ENCODE measurements at regions of chr1 and their contacts with region 1.

Region 1: DNA sequence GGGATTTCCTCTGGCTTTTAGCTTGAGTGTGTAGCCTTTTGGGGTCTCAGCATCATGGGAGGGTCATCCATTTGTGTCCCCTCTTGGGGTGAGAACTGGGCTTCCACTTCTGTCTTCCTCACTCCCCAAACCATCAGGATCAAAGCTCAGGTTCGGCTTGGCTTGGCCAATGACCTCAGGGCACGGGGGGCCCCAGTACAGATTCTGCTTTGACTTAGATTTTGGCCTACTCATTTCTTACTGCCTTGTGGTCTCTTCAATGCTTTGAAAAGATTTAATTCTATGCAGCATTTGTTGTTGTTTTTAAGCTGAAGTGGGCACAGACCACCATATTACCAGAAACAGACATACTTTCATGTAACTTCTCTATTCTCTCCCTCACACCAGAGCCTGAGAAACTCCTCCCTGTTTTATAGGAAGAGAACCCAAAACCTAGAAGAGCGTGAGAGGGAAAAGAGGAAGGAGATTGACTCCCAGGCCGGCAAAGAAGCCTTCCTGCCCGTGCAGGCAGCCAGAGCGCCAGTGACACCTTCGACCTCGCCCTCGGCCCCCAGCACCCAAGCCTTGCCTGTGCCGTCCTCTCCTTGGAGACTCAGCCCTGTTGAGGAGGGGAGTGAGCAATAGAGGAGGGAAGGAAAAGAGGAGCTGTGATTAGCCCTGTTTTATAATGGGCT is 1.9 kb upstream of the S100A3 start:
- DNase-seq: no peak
- H3K4me3 ChIP-seq: no peak overlapping the region
- H3K27ac ChIP-seq: no peak overlapping the region
- H3K4me1 ChIP-seq: peaks cover 20% of the 10 kb centered on the region
- H3K27me3 ChIP-seq: no peaks in the 10 kb centered on the region
- CTCF ChIP-seq: no peak
- POLR2A ChIP-seq: no peak

Region 2: DNA sequence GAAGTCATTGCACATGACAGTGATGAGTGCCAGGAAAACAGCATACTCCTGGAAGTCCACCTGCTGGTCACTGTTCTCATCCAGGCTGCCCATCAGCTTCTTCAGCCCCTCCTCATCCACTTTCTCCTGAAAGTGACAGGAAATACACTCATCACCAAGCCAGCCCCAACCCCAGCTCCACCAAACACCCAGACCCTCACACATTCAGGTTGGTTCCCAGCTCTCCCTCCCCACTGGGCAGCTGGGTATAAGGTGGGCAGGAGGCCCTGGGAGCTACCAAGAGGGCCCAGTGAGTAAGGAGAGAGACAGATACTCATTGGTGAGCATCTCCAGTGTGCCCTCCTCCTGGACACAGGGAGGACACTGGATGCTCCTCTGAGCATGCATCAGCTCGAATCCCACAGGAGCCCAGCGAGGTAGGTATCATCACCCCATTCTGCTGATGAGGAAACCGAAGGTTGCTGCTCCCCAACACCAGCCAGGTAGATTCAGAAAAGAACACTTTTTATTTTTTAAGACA is 10.6 kb after region 1 on chr1:
- CTCF ChIA-PET with region 1: interaction called, 13 read pairs
- POLR2A ChIA-PET with region 1: no interaction called
- dilution Hi-C with region 1: no loop called
- intact Hi-C with region 1: loop called (anchors 1 kb)
- DNase-seq: no peak
- H3K4me3 ChIP-seq: no peak overlapping the region
- H3K27ac ChIP-seq: no peak overlapping the region
- H3K4me1 ChIP-seq: peaks cover 12% of the 10 kb centered on the region
- H3K27me3 ChIP-seq: no peaks in the 10 kb centered on the region
- CTCF ChIP-seq: no peak
- POLR2A ChIP-seq: no peak